Uterus (tissue), 4 donors: ENCODE measurements at regions of chr3 and their contacts with region 1.

Region 1: GRCh38 chr3:55500555-55501330 is 13.6 kb upstream of the WNT5A start:
- DNase-seq: no peak
- H3K4me3 ChIP-seq: no peak overlapping the region
- H3K27ac ChIP-seq: no peak overlapping the region
- H3K4me1 ChIP-seq: no peaks in the 10 kb centered on the region
- H3K27me3 ChIP-seq: no peaks in the 10 kb centered on the region
- CTCF ChIP-seq: no peak
- POLR2A ChIP-seq: no peak

Region 2: DNA sequence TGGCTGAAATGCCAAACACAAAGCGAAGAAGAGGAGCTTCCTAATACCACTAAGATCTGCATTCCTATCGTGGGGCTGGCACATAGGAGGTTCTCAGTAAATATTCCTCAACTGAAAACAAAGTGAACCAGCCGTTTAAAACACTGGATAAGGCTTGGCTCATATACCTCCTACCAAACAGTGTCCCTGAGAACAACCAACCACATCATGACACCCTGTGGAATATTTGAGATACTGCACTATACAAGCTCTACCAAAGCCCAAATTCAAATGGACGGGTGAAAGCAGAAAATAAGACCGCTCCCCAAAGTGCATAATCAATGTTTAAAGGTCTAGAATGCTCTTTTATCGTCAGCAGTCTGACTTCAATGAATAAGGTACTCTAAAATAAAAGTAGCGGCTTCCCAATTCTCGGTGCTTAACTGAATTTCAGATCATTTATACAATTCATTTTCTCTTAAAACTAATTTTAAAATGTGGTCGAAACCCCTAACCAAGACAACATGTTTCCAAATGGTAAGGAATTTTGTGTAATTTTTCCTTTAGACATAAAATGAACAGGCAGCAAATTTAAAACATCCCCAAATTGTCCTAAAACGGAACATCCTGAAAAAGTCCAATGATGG is 541.7 kb after region 1 on chr3:
- intact Hi-C with region 1: loop called (anchors 10 kb)
- DNase-seq: no peak
- H3K4me3 ChIP-seq: no peak overlapping the region
- H3K27ac ChIP-seq: no peak overlapping the region
- H3K4me1 ChIP-seq: no peaks in the 10 kb centered on the region
- H3K27me3 ChIP-seq: no peaks in the 10 kb centered on the region
- CTCF ChIP-seq: peak; percentile 17 to 52 (median 36)
- POLR2A ChIP-seq: no peak